ENCODE measurements at regions of chr17 and their contacts with region 1.

Region 1: DNA sequence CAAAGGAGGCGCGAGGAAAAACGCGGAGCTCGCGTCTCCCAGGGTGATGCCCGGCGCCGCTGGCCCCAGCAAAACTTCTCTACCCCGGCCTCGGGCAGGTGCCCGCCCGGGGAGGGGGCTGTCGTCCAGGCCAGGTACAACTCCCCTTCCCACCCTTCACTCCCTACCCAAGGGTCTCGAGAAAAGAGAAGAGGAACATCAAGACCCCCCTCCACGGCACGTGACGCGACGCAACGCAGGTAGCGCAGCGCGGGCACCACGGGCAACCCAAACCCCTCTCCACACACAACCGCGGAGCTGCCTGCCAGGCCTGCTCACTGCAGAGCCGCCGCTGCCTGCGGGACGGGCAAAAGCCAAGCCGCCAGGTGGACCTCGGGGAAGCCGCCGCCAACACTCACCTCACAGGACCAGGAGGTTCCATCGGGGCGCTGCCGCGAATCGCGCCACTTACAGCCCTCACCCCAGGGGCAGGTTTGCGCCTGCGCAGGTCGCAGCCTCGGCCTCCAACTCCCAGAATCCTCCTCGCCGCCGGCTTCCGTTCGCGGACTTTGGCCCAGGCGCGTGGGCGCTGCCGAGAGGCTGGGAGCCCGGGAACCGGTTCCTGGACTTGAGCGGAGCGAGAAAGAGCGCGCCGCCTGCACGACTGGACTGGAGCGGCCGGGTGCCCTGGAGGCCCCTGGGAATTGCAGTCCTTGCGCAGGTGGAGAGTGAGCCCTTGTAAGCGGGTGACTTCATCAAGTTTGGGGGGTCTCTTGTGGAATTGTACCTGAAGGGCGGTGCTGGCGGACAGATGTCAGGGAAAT is at the start of gene ZNF232:
- DNase-seq: peak; percentile 90
- H3K4me3 Mint-ChIP-seq: peak within 1 kb of the TSS; percentile 91
- H3K27ac Mint-ChIP-seq: peak within 1 kb of the TSS; percentile 67
- H3K4me1 Mint-ChIP-seq: peaks cover 17% of the 10 kb centered on the region
- H3K27me3 Mint-ChIP-seq: peaks cover 13% of the 10 kb centered on the region
- total RNA-seq, gene ZNF232: 12.4 and 16.5 TPM in 2 replicates

Region 2: GRCh38 chr17:5155495-5155894 is 43.9 kb after region 1 on chr17:
- intact Hi-C with region 1: no loop called
- DNase-seq: no peak
- H3K4me3 Mint-ChIP-seq: no peak overlapping the region
- H3K27ac Mint-ChIP-seq: no peak overlapping the region
- H3K4me1 Mint-ChIP-seq: no peaks in the 10 kb centered on the region
- H3K27me3 Mint-ChIP-seq: peaks cover 14% of the 10 kb centered on the region

Region 3: GRCh38 chr17:5191541-5192417 is 80.2 kb after region 1 on chr17 and contains the start of gene ZNF594:
- intact Hi-C with region 1: loop called (anchors 5 kb)
- DNase-seq: peak; percentile 96
- H3K4me3 Mint-ChIP-seq: peak within 1 kb of the TSS; percentile 90
- H3K27ac Mint-ChIP-seq: peak within 1 kb of the TSS; percentile 81
- H3K4me1 Mint-ChIP-seq: peaks cover 13% of the 10 kb centered on the region
- H3K27me3 Mint-ChIP-seq: no peaks in the 10 kb centered on the region
- total RNA-seq, gene ZNF594: 8.0 and 8.9 TPM in 2 replicates

Measured in activated T-helper 2 cell treated with anti-CD3 and anti-CD28 coated beads, Interferon-gamma antibody, Interleukin-2, Interleukin-4, amounts not matched to agents 10 μg/mL and 5 μg/mL and 100 μg/mL, durations not matched to agents 14 hours and 24 hours and 36 hours (primary cell).